K562 (cell line): ENCODE measurements at regions of chr2 and their contacts with region 1.

Region 1: GRCh38 chr2:71705171-71705960 is 252.0 kb downstream of the DYSF start:
- DNase-seq: no peak
- ATAC-seq: no peak
- H3K4me3 ChIP-seq: no peak overlapping the region
- H3K27ac ChIP-seq: no peak overlapping the region
- H3K4me1 ChIP-seq: no peaks in the 10 kb centered on the region
- H3K27me3 ChIP-seq: peaks cover 0 to 57% of the 10 kb centered on the region in 2 experiments; a peak in 4 of 5 replicates
- CTCF ChIP-seq: no peak
- EP300 ChIP-seq: no peak
- POLR2A ChIP-seq: no peak
- RAD21 ChIP-seq: no peak

Region 2: DNA sequence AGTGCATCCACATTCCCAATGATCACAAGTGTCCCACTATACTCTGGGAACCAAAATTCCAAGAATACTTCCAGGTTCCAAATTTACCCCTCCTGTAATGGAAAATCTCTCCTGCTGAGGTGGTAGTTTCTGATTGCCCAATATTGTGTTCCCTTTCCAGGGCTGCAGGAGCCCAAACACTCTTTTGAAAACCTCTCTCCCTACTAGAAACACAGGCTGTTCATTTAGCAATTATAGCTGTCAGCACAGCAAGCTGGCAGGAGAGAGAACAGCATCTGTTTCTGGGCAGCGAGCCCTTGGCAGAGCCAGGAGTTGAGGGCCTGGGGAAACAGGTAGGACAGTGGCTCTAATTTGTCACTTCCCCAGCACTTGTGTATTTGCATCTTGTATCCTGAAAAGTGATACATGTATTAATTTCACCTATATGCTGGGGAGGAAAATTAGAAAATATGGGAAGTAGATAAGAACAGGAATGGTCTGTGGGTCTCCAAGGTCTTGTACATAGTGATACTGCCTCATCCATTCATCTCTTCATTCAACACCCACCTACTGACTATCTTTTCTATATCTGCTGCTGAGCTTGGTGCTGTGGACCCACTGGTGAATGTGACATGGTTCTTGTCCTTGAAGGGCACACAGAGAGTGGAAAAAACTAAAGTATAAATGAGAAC is 461.6 kb before region 1 on chr2:
- CTCF ChIA-PET with region 1: no interaction called
- POLR2A ChIA-PET with region 1: no interaction called
- in situ Hi-C with region 1: no loop called
- intact Hi-C with region 1: no loop called
- DNase-seq: no peak
- ATAC-seq: no peak
- H3K4me3 ChIP-seq: no peak overlapping the region
- H3K27ac ChIP-seq: no peak overlapping the region
- H3K4me1 ChIP-seq: no peaks in the 10 kb centered on the region
- H3K27me3 ChIP-seq: peaks cover 0 to 6% of the 10 kb centered on the region in 2 experiments; a peak in 2 of 5 replicates
- CTCF ChIP-seq: no peak
- EP300 ChIP-seq: no peak
- POLR2A ChIP-seq: no peak
- RAD21 ChIP-seq: no peak

Region 3: DNA sequence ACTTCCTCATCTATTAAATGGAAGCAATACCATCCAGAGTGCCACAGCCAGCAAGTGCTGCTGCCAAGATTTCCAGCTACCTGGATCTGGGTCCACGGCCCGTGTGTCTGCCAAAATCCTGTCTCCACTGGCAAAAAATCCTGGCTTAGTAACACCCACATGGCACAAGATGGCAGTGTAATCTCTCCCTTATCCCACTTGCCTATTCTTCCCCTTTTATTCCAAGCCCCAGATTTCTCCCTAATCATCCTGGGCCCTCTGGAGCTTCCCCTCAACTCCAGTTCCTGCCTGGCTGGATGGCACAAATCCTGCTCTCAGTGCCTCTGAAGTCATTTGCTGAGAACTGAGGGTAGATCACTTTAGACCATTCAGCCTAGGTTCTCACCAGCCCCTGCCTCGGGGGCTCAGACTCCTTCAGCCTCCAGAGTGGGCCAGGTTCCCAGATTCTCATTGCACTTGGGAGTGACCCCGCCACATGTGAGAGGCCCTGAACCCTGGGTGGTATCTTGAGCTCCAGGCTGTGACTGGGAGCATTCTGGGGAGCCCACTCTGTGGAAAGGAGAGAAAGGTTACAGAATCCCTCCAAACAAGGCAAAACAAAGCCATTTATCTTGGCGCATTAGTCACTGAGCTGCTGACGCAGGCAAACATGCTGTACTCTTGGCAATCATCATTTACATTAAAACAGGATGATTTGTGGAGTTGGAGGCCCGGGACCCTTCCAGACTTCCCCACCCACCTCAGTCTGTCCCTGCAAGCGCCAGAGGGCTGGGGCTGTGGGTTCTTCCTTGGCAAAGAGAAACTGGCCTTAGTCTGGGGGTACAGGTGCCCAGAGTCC is 73.8 kb after region 1 on chr2:
- CTCF ChIA-PET with region 1: no interaction called
- POLR2A ChIA-PET with region 1: no interaction called
- in situ Hi-C with region 1: loop called (anchors 5 kb)
- intact Hi-C with region 1: no loop called
- DNase-seq: no peak
- ATAC-seq: no peak
- H3K4me3 ChIP-seq: no peak overlapping the region
- H3K27ac ChIP-seq: no peak overlapping the region
- H3K4me1 ChIP-seq: no peaks in the 10 kb centered on the region
- H3K27me3 ChIP-seq: peaks cover 0 to 20% of the 10 kb centered on the region in 2 experiments; a peak in 2 of 5 replicates
- CTCF ChIP-seq: peak in 1 of 3 experiments; percentile 12; a peak in 1 of 6 replicates
- EP300 ChIP-seq: no peak
- POLR2A ChIP-seq: no peak
- RAD21 ChIP-seq: no peak